SK-N-SH (cell line): ENCODE measurements at regions of chr15 and their contacts with region 1.

Region 1: GRCh38 chr15:79339564-79340314 is 28.8 kb downstream of the TMED3 start:
- DNase-seq: peak; percentile 25
- H3K4me3 ChIP-seq: no peak overlapping the region; a peak in 1 of 4 replicates
- H3K27ac ChIP-seq: no peak overlapping the region
- H3K4me1 ChIP-seq: peaks cover 0 to 5% of the 10 kb centered on the region in 2 experiments; a peak in 1 of 4 replicates
- H3K27me3 ChIP-seq: no peaks in the 10 kb centered on the region
- CTCF ChIP-seq: peak; percentile 94
- EP300 ChIP-seq: no peak
- RAD21 ChIP-seq: peak; percentile 89

Region 2: GRCh38 chr15:79091204-79091867 is 248.4 kb before region 1 on chr15:
- CTCF ChIA-PET with region 1: no interaction called
- POLR2A ChIA-PET with region 1: no interaction called
- DNase-seq: peak; percentile 81
- H3K4me3 ChIP-seq: no peak overlapping the region; a peak in 1 of 4 replicates
- H3K27ac ChIP-seq: no peak overlapping the region
- H3K4me1 ChIP-seq: peaks cover 0 to 3% of the 10 kb centered on the region in 2 experiments; a peak in 1 of 4 replicates
- H3K27me3 ChIP-seq: peaks cover 29% of the 10 kb centered on the region
- CTCF ChIP-seq: no peak
- EP300 ChIP-seq: no peak
- RAD21 ChIP-seq: no peak

Region 3: GRCh38 chr15:79310983-79311900 is 28.5 kb before region 1 on chr15 and contains the start of gene TMED3:
- CTCF ChIA-PET with region 1: interaction called, 12 read pairs
- POLR2A ChIA-PET with region 1: no interaction called
- DNase-seq: peak; percentile 99
- H3K4me3 ChIP-seq: peak within 1 kb of the TSS; percentile 94 to 99
- H3K27ac ChIP-seq: peak within 1 kb of the TSS; percentile 55 to 79
- H3K4me1 ChIP-seq: peaks cover 0 to 16% of the 10 kb centered on the region in 2 experiments; a peak in 2 of 4 replicates
- H3K27me3 ChIP-seq: peaks cover 8% of the 10 kb centered on the region; the same call in 1 of the 2 replicates
- CTCF ChIP-seq: peak; percentile 43
- EP300 ChIP-seq: no peak
- RAD21 ChIP-seq: no peak
- polyA plus RNA-seq, gene TMED3: 128 and 148 TPM in 2 replicates

Region 4: GRCh38 chr15:79329171-79329611 is 10.5 kb before region 1 on chr15:
- CTCF ChIA-PET with region 1: interaction called, 20 read pairs
- POLR2A ChIA-PET with region 1: no interaction called
- DNase-seq: no peak
- H3K4me3 ChIP-seq: no peak overlapping the region
- H3K27ac ChIP-seq: no peak overlapping the region
- H3K4me1 ChIP-seq: no peaks in the 10 kb centered on the region
- H3K27me3 ChIP-seq: no peaks in the 10 kb centered on the region
- CTCF ChIP-seq: no peak
- EP300 ChIP-seq: no peak
- RAD21 ChIP-seq: no peak

Region 5: DNA sequence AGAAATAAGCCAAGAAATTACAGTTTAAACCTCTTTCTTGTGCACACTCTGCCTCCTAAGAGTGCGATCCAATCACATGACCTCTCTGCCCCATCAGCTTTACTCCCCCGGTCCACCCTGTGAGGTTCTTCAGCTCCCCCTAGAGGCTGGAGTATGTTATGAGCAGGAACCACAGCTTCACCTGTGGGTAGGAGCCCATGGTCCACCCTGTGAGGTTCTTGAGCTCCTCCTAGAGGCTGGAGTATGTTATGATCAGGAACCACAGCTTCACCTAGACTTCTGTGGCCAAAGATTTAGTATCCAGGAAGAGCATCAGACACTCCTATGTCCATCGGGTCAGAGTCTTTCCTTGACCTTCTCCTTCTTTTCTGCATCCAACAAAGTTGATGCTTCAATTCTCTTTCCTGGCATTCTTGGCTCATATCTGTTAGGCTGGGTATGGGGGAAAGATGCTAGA is 256.3 kb after region 1 on chr15:
- CTCF ChIA-PET with region 1: interaction called, 53 read pairs
- POLR2A ChIA-PET with region 1: no interaction called
- DNase-seq: peak; percentile 84
- H3K4me3 ChIP-seq: peak overlapping the region in 1 of 2 experiments; percentile 17; a peak in 1 of 4 replicates
- H3K27ac ChIP-seq: no peak overlapping the region
- H3K4me1 ChIP-seq: no peaks in the 10 kb centered on the region
- H3K27me3 ChIP-seq: no peaks in the 10 kb centered on the region
- CTCF ChIP-seq: peak; percentile 71
- EP300 ChIP-seq: no peak
- RAD21 ChIP-seq: peak; percentile 88

Region 6: GRCh38 chr15:79989682-79990081 is 649.9 kb after region 1 on chr15:
- CTCF ChIA-PET with region 1: interaction called, 15 read pairs
- POLR2A ChIA-PET with region 1: no interaction called
- DNase-seq: no peak
- H3K4me3 ChIP-seq: no peak overlapping the region
- H3K27ac ChIP-seq: no peak overlapping the region
- H3K4me1 ChIP-seq: no peaks in the 10 kb centered on the region; a peak in 1 of 4 replicates
- H3K27me3 ChIP-seq: no peaks in the 10 kb centered on the region; the same call in 1 of the 2 replicates
- CTCF ChIP-seq: no peak
- EP300 ChIP-seq: no peak
- RAD21 ChIP-seq: no peak